ENCODE measurements at regions of chr10 and their contacts with region 1.

Region 1: DNA sequence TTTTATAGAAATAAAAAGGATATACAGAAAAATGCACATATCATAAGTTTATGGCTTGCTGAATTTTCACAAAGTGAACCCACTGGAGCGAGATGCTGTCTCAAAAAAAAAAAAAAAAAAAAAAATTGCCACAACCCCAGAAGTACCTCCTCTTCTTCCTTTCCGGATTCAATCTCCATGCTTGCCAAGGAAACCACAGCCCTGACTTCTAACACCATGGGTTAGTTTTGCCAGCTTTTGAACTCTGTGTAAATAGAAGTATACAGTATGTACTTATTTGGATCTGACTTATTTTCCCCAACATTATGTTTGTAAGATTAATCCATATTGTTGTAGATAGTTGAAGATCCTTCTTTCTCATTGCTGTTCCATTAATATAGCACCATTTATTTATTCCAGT is 40.0 kb downstream of the FANK1 start:
- DNase-seq: no peak
- H3K4me3 ChIP-seq: no peak overlapping the region
- H3K27ac ChIP-seq: no peak overlapping the region
- H3K4me1 ChIP-seq: peaks cover 0 to 3% (median 2%) of the 10 kb centered on the region in 4 experiments; a peak in 4 of 7 replicates
- H3K27me3 ChIP-seq: no peaks in the 10 kb centered on the region
- CTCF ChIP-seq: no peak
- EP300 ChIP-seq: no peak
- POLR2A ChIP-seq: no peak
- RAD21 ChIP-seq: no peak

Region 2: GRCh38 chr10:125850766-125851731 is 85.3 kb before region 1 on chr10:
- CTCF ChIA-PET with region 1: no interaction called
- POLR2A ChIA-PET with region 1: no interaction called
- DNase-seq: no peak
- H3K4me3 ChIP-seq: no peak overlapping the region
- H3K27ac ChIP-seq: no peak overlapping the region
- H3K4me1 ChIP-seq: no peaks in the 10 kb centered on the region
- H3K27me3 ChIP-seq: no peaks in the 10 kb centered on the region
- CTCF ChIP-seq: no peak
- EP300 ChIP-seq: no peak
- POLR2A ChIP-seq: no peak
- RAD21 ChIP-seq: no peak

Region 3: DNA sequence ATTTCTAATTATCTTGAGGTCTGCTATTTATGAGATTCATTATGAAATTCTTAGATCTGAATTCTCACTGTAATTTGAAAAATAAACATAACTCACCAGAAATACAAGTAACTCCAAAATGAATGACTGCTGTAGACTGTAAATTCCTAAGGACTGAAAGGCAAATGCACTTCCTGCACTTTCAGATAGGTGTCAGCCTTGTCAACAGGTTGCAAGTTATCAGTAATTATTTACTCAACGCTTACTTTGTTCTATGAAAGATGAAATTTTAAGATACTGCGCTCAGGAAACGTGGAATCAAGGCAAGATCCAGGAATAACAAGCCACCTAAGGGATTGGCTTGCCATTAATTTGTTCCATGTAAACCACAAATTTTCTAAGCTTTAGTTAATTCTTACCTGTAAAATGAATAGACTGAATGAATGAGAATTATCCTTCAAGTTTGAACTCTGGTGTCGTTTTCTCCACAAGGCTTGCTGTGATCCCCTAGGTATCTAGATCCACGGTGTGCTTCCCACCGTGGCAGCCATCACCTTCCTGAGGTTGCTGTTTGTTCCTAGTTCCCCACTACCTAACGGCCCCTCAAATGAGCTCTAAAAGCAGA is 67.9 kb before region 1 on chr10:
- CTCF ChIA-PET with region 1: interaction called, 11 read pairs
- POLR2A ChIA-PET with region 1: no interaction called
- DNase-seq: no peak
- H3K4me3 ChIP-seq: no peak overlapping the region
- H3K27ac ChIP-seq: no peak overlapping the region
- H3K4me1 ChIP-seq: no peaks in the 10 kb centered on the region
- H3K27me3 ChIP-seq: no peaks in the 10 kb centered on the region
- CTCF ChIP-seq: peak in 2 of 3 experiments; percentile 53 to 85; a peak in 3 of 4 replicates
- EP300 ChIP-seq: no peak
- POLR2A ChIP-seq: no peak
- RAD21 ChIP-seq: peak; percentile 86 to 88

Region 4: GRCh38 chr10:125916671-125917425 is 19.5 kb before region 1 on chr10:
- CTCF ChIA-PET with region 1: interaction called, 18 read pairs
- POLR2A ChIA-PET with region 1: no interaction called
- DNase-seq: no peak
- H3K4me3 ChIP-seq: no peak overlapping the region
- H3K27ac ChIP-seq: no peak overlapping the region
- H3K4me1 ChIP-seq: no peaks in the 10 kb centered on the region
- H3K27me3 ChIP-seq: no peaks in the 10 kb centered on the region
- CTCF ChIP-seq: no peak
- EP300 ChIP-seq: no peak
- POLR2A ChIP-seq: no peak
- RAD21 ChIP-seq: no peak

Region 5: GRCh38 chr10:125976960-125977603 is 40.8 kb after region 1 on chr10:
- CTCF ChIA-PET with region 1: interaction called, 20 read pairs
- POLR2A ChIA-PET with region 1: no interaction called
- DNase-seq: no peak
- H3K4me3 ChIP-seq: no peak overlapping the region
- H3K27ac ChIP-seq: no peak overlapping the region
- H3K4me1 ChIP-seq: peaks cover 0 to 8% (median under 1%) of the 10 kb centered on the region in 4 experiments; a peak in 4 of 7 replicates
- H3K27me3 ChIP-seq: no peaks in the 10 kb centered on the region
- CTCF ChIP-seq: peak; percentile 23 to 69 (median 63)
- EP300 ChIP-seq: no peak
- POLR2A ChIP-seq: no peak
- RAD21 ChIP-seq: peak; percentile 52 to 54

Region 6: DNA sequence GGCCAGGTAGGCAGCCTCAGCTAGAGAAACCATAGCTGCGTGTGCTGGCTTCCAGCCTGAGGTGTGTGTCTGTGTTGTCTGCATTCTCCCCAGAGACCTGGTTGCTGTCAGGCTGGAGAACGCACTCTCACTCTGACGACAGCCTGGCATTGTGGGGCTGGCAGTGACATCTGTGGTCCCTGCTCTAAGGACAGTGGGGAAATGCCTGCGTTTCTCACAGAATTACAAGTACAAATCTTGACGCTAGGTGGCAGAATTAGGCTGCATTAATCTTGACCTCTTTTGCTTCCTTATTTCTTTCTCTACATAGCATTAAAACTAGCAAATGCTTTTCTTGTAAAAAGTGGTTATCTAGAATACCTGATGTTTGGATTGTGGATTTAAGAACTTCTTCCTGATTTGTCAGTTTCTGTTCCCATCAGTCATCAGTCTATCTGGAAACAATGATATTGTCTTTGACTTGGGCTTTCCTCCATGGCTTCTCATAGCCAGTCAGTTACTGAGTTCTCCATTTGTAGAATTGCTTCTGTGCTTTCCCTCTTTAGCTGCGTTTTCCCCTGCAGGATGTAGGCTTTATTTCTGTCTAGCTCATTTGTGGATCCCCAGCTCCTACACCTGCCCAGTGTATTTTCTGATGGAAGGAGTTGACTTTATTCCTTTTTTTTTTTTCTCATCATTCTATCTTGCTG is 46.1 kb after region 1 on chr10:
- CTCF ChIA-PET with region 1: interaction called, 20 read pairs
- POLR2A ChIA-PET with region 1: no interaction called
- DNase-seq: peak in 1 of 2 experiments; percentile 23
- H3K4me3 ChIP-seq: no peak overlapping the region
- H3K27ac ChIP-seq: no peak overlapping the region
- H3K4me1 ChIP-seq: peaks cover 0 to 15% (median 1%) of the 10 kb centered on the region in 4 experiments; a peak in 4 of 7 replicates
- H3K27me3 ChIP-seq: no peaks in the 10 kb centered on the region
- CTCF ChIP-seq: peak in 2 of 3 experiments; percentile 59 to 68; a peak in 3 of 4 replicates
- EP300 ChIP-seq: no peak
- POLR2A ChIP-seq: no peak
- RAD21 ChIP-seq: peak; percentile 84 to 88

Region 7: DNA sequence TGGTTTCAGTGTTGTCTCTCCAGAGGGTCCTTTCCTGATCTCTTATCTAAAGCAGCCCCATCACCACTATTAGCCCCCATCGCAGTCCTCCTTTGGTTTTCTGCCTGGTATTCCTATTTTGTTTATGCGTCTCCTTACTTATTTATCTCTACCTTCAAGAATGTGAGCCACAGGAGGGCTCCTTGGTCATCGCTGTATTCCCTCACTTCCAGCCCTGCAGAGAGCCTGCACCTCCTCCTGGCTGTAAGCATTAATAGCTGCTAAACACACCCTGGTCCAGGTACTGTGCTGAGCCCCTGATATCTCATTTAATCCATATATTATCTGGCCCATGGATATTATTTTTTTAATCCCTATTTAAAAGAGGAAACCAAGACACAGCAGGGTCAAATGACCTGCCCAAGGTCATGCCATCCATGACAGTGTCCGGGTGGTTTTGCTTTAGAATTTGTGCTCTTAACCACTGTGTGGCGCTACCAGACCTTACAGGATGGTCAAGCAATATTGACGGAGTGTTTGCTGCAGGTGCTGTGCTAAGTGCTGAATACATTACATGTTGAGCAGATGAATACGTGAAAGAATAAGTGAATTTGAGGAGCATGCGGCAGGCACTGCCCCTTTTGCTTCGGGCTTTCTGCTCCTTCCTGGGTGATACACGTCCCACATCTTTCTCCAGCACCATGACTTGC is 224.8 kb after region 1 on chr10:
- CTCF ChIA-PET with region 1: interaction called, 12 read pairs
- POLR2A ChIA-PET with region 1: no interaction called
- DNase-seq: no peak
- H3K4me3 ChIP-seq: no peak overlapping the region
- H3K27ac ChIP-seq: no peak overlapping the region
- H3K4me1 ChIP-seq: peaks cover under 1 to 14% (median 9%) of the 10 kb centered on the region in 4 experiments; a peak in 5 of 7 replicates
- H3K27me3 ChIP-seq: no peaks in the 10 kb centered on the region; a peak in 1 of 7 replicates
- CTCF ChIP-seq: peak; percentile 49 to 73 (median 72)
- EP300 ChIP-seq: no peak
- POLR2A ChIP-seq: no peak
- RAD21 ChIP-seq: peak; percentile 81 to 90

Region 8: GRCh38 chr10:126504063-126504739 is 567.9 kb after region 1 on chr10:
- CTCF ChIA-PET with region 1: interaction called, 13 read pairs
- POLR2A ChIA-PET with region 1: no interaction called
- DNase-seq: peak in 1 of 2 experiments; percentile 58
- H3K4me3 ChIP-seq: no peak overlapping the region
- H3K27ac ChIP-seq: no peak overlapping the region
- H3K4me1 ChIP-seq: no peaks in the 10 kb centered on the region
- H3K27me3 ChIP-seq: no peaks in the 10 kb centered on the region
- CTCF ChIP-seq: peak; percentile 39 to 87 (median 81)
- EP300 ChIP-seq: no peak
- POLR2A ChIP-seq: no peak
- RAD21 ChIP-seq: peak; percentile 90 to 95